AG04450 (cell line): ENCODE measurements at regions of chr12 and their contacts with region 1.

Region 1: DNA sequence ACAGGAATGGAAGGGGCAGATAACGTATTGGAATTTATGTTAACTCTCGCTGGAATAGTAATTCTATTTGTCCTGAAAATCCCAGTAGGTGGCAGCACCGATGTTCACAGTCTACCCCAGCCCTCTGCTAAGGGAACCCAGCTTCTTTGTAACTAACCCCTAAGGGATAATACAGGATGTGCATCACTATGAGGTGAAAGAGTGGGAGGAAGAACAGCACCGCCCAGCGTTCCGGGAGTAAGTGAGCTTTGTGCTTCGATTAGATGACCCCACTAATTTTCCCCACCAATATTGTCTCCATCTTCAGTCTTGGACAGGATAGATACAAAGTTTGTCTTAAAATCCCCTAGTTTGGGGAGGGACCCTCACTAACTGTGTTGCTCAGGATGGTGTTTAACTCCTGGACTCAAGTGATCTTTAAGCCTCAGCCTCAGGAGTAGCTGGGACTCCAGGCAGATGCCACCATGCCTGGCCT is 2.7 kb downstream of the SLC2A3 start:
- DNase-seq: peak; percentile 91
- H3K4me3 ChIP-seq: peak overlapping the region; percentile 93
- H3K27ac ChIP-seq: peak overlapping the region; percentile 42
- H3K27me3 ChIP-seq: no peaks in the 10 kb centered on the region
- CTCF ChIP-seq: peak; percentile 81

Region 2: GRCh38 chr12:7638760-7639555 is 294.3 kb before region 1 on chr12:
- CTCF ChIA-PET with region 1: no interaction called
- POLR2A ChIA-PET with region 1: no interaction called
- DNase-seq: peak; percentile 37
- H3K4me3 ChIP-seq: no peak overlapping the region
- H3K27ac ChIP-seq: no peak overlapping the region
- H3K27me3 ChIP-seq: peaks cover 4% of the 10 kb centered on the region
- CTCF ChIP-seq: peak; percentile 80

Region 3: DNA sequence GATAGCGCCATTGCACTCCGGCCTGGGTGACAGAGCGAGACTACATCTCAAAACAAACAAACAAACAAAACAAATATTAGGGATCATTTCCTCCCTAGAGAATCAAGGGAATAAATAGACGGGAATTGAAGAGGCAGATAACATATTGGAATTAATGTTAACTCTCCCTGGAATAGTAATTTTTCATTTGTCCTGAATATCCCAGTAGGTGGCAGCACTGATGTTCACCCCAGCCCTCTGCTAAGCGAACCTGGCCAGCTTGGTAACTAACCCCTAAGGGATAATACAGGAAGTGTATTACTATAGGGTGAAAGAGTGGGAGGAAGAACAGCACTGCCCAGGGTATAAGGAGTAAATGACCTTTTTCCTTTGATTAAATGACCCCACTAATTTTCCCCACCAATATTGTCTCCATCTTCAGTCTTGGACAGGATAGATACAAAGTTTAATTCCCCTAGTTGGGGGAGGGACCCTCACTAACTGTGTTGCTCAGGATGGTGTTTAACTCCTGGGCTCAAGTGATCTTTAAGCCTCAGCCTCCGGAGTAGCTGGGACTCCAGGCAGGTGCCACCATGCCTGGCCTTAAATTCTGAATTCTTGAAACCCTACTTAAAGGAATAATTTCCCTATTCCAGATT is 101.1 kb before region 1 on chr12:
- CTCF ChIA-PET with region 1: interaction called, 21 read pairs
- POLR2A ChIA-PET with region 1: no interaction called
- DNase-seq: peak; percentile 27
- H3K4me3 ChIP-seq: no peak overlapping the region
- H3K27ac ChIP-seq: no peak overlapping the region
- H3K27me3 ChIP-seq: no peaks in the 10 kb centered on the region
- CTCF ChIP-seq: peak; percentile 68

Region 4: DNA sequence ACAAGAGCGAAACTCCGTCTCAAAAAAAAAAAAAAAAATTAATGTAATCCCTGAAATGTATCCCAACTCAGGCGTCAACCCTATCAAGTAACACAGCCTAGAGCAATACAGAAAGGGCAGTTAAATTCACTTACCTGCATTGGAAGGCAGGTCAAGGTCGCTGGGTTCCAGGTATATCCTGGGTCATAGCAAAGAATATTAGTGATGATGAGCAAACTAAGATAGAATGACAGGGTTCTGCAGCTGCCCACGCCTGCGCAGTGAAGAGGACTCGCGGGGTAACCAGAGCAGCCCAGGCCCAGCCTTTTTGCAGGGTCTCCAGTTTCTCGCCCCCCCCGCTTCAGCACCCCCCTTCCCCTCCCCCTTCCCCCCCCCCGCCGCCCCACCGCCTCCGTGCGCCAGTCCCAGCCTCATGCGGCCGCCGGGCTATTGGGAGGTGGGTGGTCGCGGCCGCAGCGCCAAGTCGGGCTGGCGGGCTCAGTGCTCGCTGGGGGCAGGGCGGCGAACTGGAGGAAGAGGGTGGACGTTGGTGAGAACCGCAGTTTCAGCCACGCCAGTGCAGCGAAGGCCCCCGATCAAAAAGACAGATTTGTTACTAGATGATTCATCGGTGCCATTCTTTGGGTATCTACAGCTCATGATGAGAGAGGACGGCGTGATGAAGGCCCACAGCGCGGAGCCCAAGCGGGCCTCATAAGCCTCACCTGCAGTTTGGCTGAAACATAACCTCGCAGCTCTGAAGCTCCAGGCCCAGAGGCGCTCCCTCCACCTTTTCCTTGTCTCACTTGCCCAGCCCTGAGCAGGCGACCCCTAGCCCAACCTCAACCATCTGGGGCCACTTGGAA is 17.5 kb before region 1 on chr12:
- CTCF ChIA-PET with region 1: interaction called, 19 read pairs
- POLR2A ChIA-PET with region 1: interaction called, 3 read pairs
- DNase-seq: no peak
- H3K4me3 ChIP-seq: peak overlapping the region; percentile 32
- H3K27ac ChIP-seq: no peak overlapping the region
- H3K27me3 ChIP-seq: no peaks in the 10 kb centered on the region
- CTCF ChIP-seq: no peak

Region 5: DNA sequence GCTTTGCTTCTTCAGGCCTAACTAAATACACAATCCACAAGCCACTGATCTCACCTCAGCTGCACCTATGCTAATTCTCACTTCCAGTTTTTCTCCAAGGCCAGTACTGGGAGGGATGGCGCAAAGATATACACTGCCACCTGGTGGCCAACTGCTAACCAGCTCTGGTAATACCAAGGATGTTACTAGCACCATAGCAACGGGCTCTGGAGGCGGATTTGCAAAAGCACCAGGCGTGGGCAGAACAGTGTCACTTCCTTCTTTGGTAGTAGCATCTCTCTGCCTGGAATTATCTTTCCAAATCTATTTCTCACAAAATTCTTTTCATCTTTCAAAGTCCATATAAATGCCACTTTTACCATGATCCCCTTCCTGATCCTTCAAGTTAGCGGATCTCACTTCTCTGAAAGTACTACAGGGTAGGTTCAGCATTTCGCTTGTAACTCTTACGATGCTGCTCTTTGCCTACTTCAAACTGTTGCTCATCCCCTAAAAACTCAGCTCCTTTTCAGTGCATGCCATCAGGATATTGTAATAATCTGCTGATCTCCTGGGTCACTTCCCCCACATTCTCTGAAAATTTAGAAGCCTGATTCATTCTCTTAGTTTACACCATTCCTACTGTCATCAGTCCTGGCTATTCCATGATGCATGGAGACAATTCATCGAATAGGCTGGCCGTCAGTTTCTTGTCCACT is 62.1 kb after region 1 on chr12:
- CTCF ChIA-PET with region 1: interaction called, 64 read pairs
- POLR2A ChIA-PET with region 1: interaction called, 51 read pairs
- DNase-seq: peak; percentile 68
- H3K4me3 ChIP-seq: peak overlapping the region; percentile 23; the same call in 1 of the 2 replicates
- H3K27ac ChIP-seq: peak overlapping the region; percentile 96
- H3K27me3 ChIP-seq: no peaks in the 10 kb centered on the region
- CTCF ChIP-seq: peak; percentile 76

Region 6: DNA sequence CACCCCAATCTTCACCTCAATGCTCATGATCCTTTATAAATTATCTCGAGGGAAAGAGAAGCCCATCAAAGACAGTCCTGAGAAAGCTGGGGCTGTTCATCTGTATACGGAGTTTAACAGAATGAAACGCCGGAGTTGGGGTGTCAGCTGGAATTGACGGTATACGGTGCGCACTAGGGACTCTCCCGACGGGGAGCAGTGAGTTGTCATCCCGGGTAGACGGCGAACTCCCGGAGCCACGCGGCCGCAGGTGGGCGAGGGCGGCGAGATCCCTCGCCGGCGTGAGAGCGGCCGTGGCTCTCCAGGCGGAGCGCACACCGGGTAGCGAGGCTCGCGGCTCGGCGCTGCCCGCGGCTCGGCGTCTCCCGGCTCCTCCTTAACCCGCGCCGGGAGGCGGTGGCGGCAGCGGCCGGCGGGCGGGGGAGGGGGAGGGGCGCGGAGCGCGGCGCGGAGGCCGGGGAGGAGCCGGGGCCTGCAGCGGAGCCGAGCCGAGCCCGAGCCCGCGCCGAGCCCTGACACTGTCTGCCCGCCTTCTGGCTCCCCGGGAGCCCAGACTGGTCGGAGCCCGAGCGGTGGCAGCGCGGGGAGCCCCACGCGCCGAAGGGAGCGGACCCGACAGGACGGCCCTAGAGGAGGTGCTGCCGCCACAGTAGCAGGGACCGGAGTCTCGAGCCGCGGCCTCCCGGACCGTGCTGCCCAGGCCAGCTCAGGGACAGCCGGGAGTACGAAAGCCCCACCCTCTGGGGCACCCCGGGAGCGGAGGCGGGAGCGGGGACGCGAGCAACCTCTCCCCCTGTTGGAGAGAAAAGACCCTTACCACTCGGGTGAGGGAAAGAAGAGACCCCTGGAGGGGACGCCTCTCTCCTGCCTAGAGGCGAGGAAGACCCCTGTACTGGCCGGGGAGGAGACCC is 99.2 kb after region 1 on chr12 and contains the start of gene FOXJ2:
- CTCF ChIA-PET with region 1: interaction called, 14 read pairs
- POLR2A ChIA-PET with region 1: interaction called, 4 read pairs
- DNase-seq: no peak
- H3K4me3 ChIP-seq: peak within 1 kb of the TSS; percentile 87
- H3K27ac ChIP-seq: peak within 1 kb of the TSS; percentile 80
- H3K27me3 ChIP-seq: no peaks in the 10 kb centered on the region
- CTCF ChIP-seq: peak; percentile 14; the same call in 1 of the 2 replicates
- polyA plus RNA-seq, gene FOXJ2: 5.7 and 6.3 TPM in 2 replicates

Region 7: DNA sequence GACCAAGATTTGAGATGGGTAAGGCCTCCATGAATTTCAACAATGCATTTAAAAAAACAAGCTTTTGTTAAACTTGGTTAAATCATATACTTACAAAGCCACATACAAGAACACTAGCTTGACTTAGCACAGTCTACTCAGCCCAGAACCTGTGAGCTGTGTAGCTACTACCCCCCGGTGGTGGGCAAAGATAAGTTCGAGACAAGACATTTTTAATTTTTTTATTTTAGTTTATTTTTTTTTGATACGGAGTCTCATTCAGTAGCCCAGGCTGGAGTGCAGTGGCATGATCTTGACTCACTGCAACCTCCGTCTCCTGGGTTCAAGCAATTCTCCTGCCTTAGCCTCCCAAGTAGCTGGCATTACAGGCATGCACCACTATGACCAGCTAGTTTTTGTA is 145.1 kb after region 1 on chr12:
- CTCF ChIA-PET with region 1: interaction called, 24 read pairs
- POLR2A ChIA-PET with region 1: interaction called, 4 read pairs
- DNase-seq: peak; percentile 63
- H3K4me3 ChIP-seq: no peak overlapping the region
- H3K27ac ChIP-seq: no peak overlapping the region
- H3K27me3 ChIP-seq: no peaks in the 10 kb centered on the region
- CTCF ChIP-seq: peak; percentile 63

Region 8: GRCh38 chr12:8449293-8449945 is 516.1 kb after region 1 on chr12:
- CTCF ChIA-PET with region 1: no interaction called
- POLR2A ChIA-PET with region 1: no interaction called
- DNase-seq: no peak
- H3K4me3 ChIP-seq: no peak overlapping the region
- H3K27ac ChIP-seq: no peak overlapping the region
- H3K27me3 ChIP-seq: no peaks in the 10 kb centered on the region
- CTCF ChIP-seq: no peak